PC-9 (cell line): ENCODE measurements at regions of chr1 and their contacts with region 1.

Region 1: GRCh38 chr1:56578963-56579875 is at the start of gene PLPP3:
- DNase-seq: peak; percentile 81 to 86
- H3K4me3 ChIP-seq: peak within 1 kb of the TSS; percentile 87
- H3K27ac ChIP-seq: peak within 1 kb of the TSS; percentile 57
- H3K4me1 ChIP-seq: peaks cover 40% of the 10 kb centered on the region
- H3K27me3 ChIP-seq: no peaks in the 10 kb centered on the region
- CTCF ChIP-seq: peak; percentile 65
- total RNA-seq, gene PLPP3: 16.5 and 22.4 TPM in 2 replicates

Region 2: GRCh38 chr1:55284852-55285251 is 1294.4 kb before region 1 on chr1:
- CTCF ChIA-PET with region 1: interaction called, 4 read pairs
- POLR2A ChIA-PET with region 1: no interaction called
- intact Hi-C with region 1: loop called (anchors 1 kb)
- DNase-seq: peak in 1 of 2 experiments; percentile 41
- H3K4me3 ChIP-seq: no peak overlapping the region
- H3K27ac ChIP-seq: no peak overlapping the region
- H3K4me1 ChIP-seq: peaks cover 4% of the 10 kb centered on the region; the same call in 1 of the 2 replicates
- H3K27me3 ChIP-seq: no peaks in the 10 kb centered on the region
- CTCF ChIP-seq: peak; percentile 79

Region 3: DNA sequence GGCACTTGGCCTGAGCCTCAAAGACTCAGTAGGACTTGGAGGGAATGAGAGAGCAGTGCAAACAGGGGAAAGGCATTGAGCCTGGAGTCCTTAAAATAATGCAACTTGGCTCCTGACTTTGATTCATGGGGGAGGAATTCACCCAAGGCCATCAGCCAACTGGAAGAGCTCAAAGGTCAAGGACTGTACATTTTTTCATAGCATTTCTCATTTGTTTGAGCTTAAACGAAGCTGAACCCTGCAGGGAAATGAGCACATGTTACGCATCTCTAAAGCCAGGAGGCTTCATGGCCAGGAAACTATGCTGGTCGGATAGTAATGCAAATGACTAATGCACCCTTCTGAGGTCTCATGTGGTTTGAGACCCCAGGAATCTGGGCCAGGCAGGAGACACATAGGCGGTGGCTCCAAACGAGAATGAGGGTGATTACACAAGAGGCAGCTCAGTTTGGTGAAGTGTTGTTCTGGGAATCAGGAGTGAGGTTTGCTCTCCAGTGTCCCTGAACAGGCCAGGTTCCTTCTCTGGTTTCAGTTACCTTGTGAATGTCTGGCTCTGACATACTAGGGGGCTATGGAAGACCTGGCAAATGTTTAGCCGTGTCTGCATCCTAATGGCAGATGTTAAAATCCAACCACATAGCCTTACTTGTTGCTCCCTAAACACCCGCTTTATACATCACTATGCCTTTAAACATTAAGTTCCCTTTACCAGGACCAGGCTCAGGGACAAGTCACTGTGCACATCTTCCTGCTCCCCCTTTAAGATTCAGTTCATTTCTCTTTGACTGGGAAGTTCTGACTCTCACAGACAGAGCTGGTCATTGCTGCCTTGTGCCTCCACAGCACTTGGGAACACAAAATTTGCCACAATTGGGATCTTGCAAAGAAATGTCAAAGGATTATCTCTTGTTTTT is 860.2 kb before region 1 on chr1:
- CTCF ChIA-PET with region 1: no interaction called
- POLR2A ChIA-PET with region 1: no interaction called
- intact Hi-C with region 1: loop called (anchors 2 kb)
- DNase-seq: peak; percentile 85 to 99
- H3K4me3 ChIP-seq: no peak overlapping the region
- H3K27ac ChIP-seq: peak overlapping the region; percentile 92
- H3K4me1 ChIP-seq: peaks cover 40% of the 10 kb centered on the region
- H3K27me3 ChIP-seq: no peaks in the 10 kb centered on the region
- CTCF ChIP-seq: no peak

Region 4: GRCh38 chr1:56120021-56120420 is 459.2 kb before region 1 on chr1:
- CTCF ChIA-PET with region 1: no interaction called
- POLR2A ChIA-PET with region 1: interaction called, 3 read pairs
- intact Hi-C with region 1: loop called (anchors 10 kb)
- DNase-seq: no peak
- H3K4me3 ChIP-seq: no peak overlapping the region
- H3K27ac ChIP-seq: no peak overlapping the region
- H3K4me1 ChIP-seq: peaks cover 4% of the 10 kb centered on the region
- H3K27me3 ChIP-seq: no peaks in the 10 kb centered on the region
- CTCF ChIP-seq: no peak

Region 5: DNA sequence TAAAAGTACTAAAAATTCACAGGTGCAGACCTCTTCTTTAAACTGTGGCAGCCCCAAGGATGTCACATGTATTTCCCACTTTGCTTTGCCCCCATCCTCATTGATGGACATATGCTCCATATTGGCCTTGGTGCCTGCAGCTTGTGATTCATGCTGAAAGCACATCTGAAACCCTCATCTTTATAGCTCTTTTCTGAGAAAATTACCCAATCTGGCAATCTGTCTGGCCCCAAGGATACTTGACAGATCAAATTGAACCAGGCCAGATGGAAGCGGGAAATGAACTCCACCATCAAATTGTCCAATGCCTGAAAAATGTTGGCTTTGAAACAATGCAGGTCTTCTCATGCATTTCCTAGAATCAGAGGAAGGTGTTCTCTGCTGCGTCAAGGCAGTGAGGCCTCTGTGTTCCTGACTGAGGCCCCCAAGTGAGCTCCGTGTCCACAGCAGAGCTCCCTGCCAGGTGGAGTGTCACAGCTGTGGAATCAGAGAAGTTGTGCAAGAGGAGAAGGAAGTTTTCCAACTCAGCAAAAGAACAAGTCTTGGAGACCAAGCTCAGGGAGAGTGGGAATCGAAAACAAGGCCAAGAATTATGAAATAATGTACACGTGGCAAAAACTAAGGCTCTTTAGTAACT is 323.6 kb before region 1 on chr1:
- CTCF ChIA-PET with region 1: no interaction called
- POLR2A ChIA-PET with region 1: no interaction called
- intact Hi-C with region 1: no loop called
- DNase-seq: no peak
- H3K4me3 ChIP-seq: no peak overlapping the region
- H3K27ac ChIP-seq: no peak overlapping the region
- H3K4me1 ChIP-seq: no peaks in the 10 kb centered on the region
- H3K27me3 ChIP-seq: no peaks in the 10 kb centered on the region
- CTCF ChIP-seq: no peak

Region 6: DNA sequence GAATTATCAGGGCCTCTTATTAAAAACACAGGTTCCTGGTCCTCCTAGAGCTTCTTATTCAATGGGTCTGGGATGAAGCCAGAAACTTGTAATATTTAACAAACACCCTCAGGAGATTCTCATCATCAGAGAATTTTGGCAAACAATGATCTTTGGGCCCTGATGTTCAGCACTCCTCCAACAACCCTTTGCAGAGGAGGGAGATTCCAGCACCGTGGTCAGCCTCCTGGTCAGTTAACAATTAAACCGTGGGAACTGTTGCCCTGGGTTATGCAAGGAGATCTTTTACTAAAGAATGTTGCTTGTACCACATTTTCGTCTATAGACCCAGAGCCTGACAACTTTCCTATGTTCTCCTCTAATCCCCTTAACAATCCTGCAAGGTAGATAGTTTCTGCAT is 294.3 kb before region 1 on chr1:
- CTCF ChIA-PET with region 1: no interaction called
- POLR2A ChIA-PET with region 1: no interaction called
- intact Hi-C with region 1: loop called (anchors 2 kb)
- DNase-seq: peak; percentile 36 to 90
- H3K4me3 ChIP-seq: no peak overlapping the region
- H3K27ac ChIP-seq: peak overlapping the region; percentile 89
- H3K4me1 ChIP-seq: peaks cover 48% of the 10 kb centered on the region
- H3K27me3 ChIP-seq: no peaks in the 10 kb centered on the region
- CTCF ChIP-seq: no peak

Region 7: GRCh38 chr1:56376188-56376984 is 202.8 kb before region 1 on chr1:
- CTCF ChIA-PET with region 1: no interaction called
- POLR2A ChIA-PET with region 1: no interaction called
- intact Hi-C with region 1: loop called (anchors 1 kb)
- DNase-seq: peak; percentile 81 to 91
- H3K4me3 ChIP-seq: peak overlapping the region; percentile 23; the same call in 1 of the 2 replicates
- H3K27ac ChIP-seq: peak overlapping the region; percentile 83
- H3K4me1 ChIP-seq: peaks cover 51% of the 10 kb centered on the region
- H3K27me3 ChIP-seq: no peaks in the 10 kb centered on the region
- CTCF ChIP-seq: no peak

Region 8: GRCh38 chr1:56527548-56528302 is 51.5 kb before region 1 on chr1:
- CTCF ChIA-PET with region 1: no interaction called
- POLR2A ChIA-PET with region 1: no interaction called
- intact Hi-C with region 1: no loop called
- DNase-seq: no peak
- H3K4me3 ChIP-seq: no peak overlapping the region
- H3K27ac ChIP-seq: peak overlapping the region; percentile 15; the same call in 1 of the 2 replicates
- H3K4me1 ChIP-seq: no peaks in the 10 kb centered on the region; the same call in 1 of the 2 replicates
- H3K27me3 ChIP-seq: no peaks in the 10 kb centered on the region
- CTCF ChIP-seq: no peak

Region 9: DNA sequence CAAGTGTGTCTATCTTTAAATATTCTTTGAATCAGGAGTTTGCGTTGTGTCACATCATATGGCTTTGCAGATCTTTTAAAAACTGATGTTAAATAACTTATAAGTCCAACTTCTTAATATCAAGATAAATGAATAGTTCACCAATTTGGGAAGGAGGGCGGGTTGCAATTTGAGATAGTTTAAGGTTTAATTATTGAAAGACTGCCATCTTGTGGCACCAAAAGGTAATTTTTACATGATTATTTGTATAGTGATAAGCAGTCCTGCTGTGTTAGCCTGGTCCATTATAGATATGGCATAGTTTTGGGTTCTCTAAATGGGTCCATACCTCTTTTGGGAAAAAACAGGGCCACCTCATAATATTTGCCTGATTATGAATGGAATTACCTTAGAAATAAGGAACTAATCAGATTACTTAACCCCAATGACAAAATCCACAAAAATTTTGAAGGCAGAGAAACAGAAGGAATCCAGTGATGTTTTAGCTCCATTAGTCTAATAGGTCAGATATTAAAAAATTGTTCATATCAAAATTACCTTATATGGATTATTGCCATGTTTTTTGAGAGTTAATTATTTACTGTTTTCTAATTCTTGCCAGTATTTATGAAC is 130.2 kb after region 1 on chr1:
- CTCF ChIA-PET with region 1: interaction called, 5 read pairs
- POLR2A ChIA-PET with region 1: no interaction called
- intact Hi-C with region 1: loop called (anchors 2 kb)
- DNase-seq: peak in 1 of 2 experiments; percentile 49
- H3K4me3 ChIP-seq: no peak overlapping the region
- H3K27ac ChIP-seq: no peak overlapping the region
- H3K4me1 ChIP-seq: peaks cover 17% of the 10 kb centered on the region
- H3K27me3 ChIP-seq: no peaks in the 10 kb centered on the region
- CTCF ChIP-seq: peak; percentile 80